PC-9 (cell line): ENCODE measurements at regions of chr16 and their contacts with region 1.

Region 1: GRCh38 chr16:23267494-23268051 is 34.5 kb upstream of the SCNN1B start:
- DNase-seq: no peak
- H3K4me3 ChIP-seq: no peak overlapping the region
- H3K27ac ChIP-seq: no peak overlapping the region
- H3K4me1 ChIP-seq: peaks cover 24% of the 10 kb centered on the region
- H3K27me3 ChIP-seq: no peaks in the 10 kb centered on the region
- CTCF ChIP-seq: no peak

Region 2: GRCh38 chr16:23296994-23297393 is 29.4 kb after region 1 on chr16:
- CTCF ChIA-PET with region 1: interaction called, 10 read pairs
- POLR2A ChIA-PET with region 1: no interaction called
- intact Hi-C with region 1: no loop called
- DNase-seq: peak; percentile 29 to 86
- H3K4me3 ChIP-seq: 0 out of 2 replicates have a peak overlapping the region, but pooled peaks have one; percentile 13
- H3K27ac ChIP-seq: peak overlapping the region; percentile 42
- H3K4me1 ChIP-seq: peaks cover 42% of the 10 kb centered on the region
- H3K27me3 ChIP-seq: no peaks in the 10 kb centered on the region
- CTCF ChIP-seq: peak; percentile 55; the same call in 1 of the 2 replicates